ENCODE measurements at regions of chr10 and their contacts with region 1.

Region 1: DNA sequence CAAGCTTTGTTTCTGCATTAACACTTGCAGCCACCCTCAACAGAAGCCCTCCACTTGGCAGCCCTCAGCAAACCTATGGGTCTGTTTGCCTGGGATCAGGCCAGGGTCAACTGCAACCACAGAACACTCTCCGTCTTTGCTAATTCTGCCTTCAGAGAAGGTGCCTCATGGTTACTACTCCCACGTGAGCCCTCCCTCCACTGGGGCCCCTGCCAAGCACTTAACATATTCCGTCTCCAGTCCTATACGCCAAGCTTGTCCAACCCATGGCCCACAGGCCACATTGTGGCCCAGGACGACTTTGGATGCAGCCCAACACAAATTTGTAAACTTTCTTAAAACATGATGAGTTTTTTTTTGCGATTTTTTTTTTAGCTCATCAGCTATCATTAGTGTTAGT is 54.7 kb downstream of the HSPA12A start:
- DNase-seq: no peak
- H3K4me3 Mint-ChIP-seq: no peak overlapping the region
- H3K27ac Mint-ChIP-seq: no peak overlapping the region
- H3K4me1 Mint-ChIP-seq: no peaks in the 10 kb centered on the region
- H3K27me3 Mint-ChIP-seq: peaks cover 31% of the 10 kb centered on the region

Region 2: GRCh38 chr10:116765547-116766162 is 78.0 kb after region 1 on chr10:
- CTCF ChIA-PET with region 1: interaction called, 10 read pairs
- POLR2A ChIA-PET with region 1: no interaction called
- intact Hi-C with region 1: loop called (anchors 1 kb)
- DNase-seq: peak; percentile 58
- H3K4me3 Mint-ChIP-seq: no peak overlapping the region
- H3K27ac Mint-ChIP-seq: no peak overlapping the region
- H3K4me1 Mint-ChIP-seq: no peaks in the 10 kb centered on the region
- H3K27me3 Mint-ChIP-seq: peaks cover 52% of the 10 kb centered on the region

Region 3: GRCh38 chr10:116787893-116788665 is 100.4 kb after region 1 on chr10:
- CTCF ChIA-PET with region 1: interaction called, 61 read pairs
- POLR2A ChIA-PET with region 1: interaction called, 4 read pairs
- intact Hi-C with region 1: loop called (anchors 1 kb)
- DNase-seq: peak; percentile 84
- H3K4me3 Mint-ChIP-seq: peak overlapping the region; percentile 16
- H3K27ac Mint-ChIP-seq: no peak overlapping the region
- H3K4me1 Mint-ChIP-seq: peaks cover 18% of the 10 kb centered on the region
- H3K27me3 Mint-ChIP-seq: peaks cover 25% of the 10 kb centered on the region

Region 4: DNA sequence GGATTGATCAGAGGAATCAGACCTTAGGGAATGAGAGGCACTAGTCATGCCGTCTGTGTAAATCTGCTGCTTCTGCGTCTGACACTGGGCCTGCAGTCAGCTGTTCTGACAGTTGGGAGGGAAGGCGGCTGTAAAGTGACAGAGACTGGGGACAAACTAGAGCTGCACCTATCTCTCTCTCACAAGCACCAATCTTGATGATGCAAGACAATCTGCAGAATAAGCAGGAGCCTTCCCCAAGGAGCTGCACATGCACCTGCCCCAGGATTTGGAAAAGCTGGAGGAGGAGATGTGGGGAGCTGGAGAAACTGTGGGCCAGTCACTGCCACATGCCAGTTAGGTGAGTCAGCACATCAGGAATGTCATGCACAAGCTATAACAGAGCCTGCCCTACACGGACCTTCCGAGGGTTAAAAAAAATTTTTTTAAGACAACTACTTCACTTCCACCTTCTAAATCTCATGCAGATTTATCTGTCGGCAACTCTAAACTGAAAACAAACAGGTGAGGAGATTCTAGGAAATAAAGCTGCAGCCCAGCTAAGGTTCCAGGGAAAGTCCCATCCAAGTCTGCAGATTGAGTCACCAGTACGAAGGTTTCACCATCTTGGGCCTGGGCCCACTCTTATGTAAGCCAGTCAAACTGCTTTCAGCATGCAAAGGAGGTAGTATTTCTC is 200.9 kb after region 1 on chr10:
- CTCF ChIA-PET with region 1: no interaction called
- POLR2A ChIA-PET with region 1: no interaction called
- intact Hi-C with region 1: no loop called
- DNase-seq: no peak
- H3K4me3 Mint-ChIP-seq: no peak overlapping the region
- H3K27ac Mint-ChIP-seq: no peak overlapping the region
- H3K4me1 Mint-ChIP-seq: no peaks in the 10 kb centered on the region
- H3K27me3 Mint-ChIP-seq: peaks cover 24% of the 10 kb centered on the region

Measured in activated CD4-positive, alpha-beta memory T cell treated with anti-CD3 and anti-CD28 coated beads for 36 hours (primary cell).